Head of caudate nucleus (tissue), 42 donors: ENCODE measurements at regions of chr7 and their contacts with region 1.

Region 1: GRCh38 chr7:131424219-131424822 is 96.6 kb downstream of the MKLN1 start:
- DNase-seq: peak in 8 of 42 donors; percentile 9 to 62 (median 30)

Region 2: DNA sequence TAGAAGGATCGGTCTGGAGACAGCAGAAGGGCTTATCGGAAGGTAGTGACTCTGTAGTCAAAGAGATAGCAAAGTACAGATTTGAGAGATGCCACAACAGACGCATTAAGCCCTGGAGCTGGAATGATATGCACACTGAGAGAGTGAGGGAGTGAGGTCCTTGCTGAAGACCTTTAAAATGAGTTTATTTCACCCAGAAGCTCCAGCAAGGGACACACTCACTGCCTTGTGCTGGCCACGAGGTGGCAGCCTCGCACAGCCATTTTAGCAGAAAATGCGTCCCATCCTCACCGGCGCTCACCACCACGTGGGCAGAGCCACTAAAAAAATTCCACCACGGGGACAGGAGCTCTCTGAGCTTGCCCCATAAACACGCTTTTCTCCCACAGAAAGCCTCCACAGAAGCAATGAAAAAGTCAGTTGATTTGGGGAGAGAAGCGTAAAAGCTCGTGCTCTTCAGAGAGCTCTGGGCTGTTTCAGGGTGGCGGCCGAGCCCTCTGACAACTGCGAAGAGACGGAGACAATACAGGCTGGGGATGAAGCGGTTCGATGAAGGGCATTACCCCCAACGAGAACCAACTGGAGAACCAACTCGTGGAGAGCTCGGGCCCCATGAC is 527.3 kb before region 1 on chr7:
- intact Hi-C with region 1: loop called (anchors 10 kb)
- DNase-seq: peak; percentile 72 to 92 (median 84)

Region 3: DNA sequence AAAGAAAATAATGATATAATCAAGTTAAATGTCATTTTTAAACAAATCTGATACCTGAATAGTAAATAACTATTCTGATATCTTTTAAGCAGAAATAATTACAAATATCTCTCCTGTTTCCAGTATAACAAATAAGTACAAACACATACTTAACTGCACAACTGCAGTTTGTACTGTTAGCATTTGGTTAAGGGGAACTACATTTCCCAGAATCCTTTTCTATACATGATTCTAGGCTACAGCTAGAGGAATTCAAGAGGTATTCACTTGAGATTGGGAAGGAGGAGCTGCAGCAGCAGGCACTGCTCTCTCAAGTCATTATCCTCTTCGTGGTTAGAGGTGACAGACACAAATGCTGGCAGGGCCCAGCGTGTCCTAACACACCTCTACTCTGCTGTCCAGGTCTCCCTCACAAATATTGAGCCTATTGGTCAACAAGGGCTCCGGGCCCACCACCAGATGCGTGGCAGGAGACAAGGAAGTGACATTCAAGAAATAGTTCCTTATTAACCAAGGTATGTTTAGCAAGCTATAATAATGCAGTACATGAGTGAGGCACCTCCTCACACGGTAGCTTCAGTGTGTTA is 351.7 kb before region 1 on chr7:
- intact Hi-C with region 1: loop called (anchors 10 kb)
- DNase-seq: no peak

Region 4: GRCh38 chr7:131327626-131328376 is 96.5 kb before region 1 on chr7 and contains the start of gene MKLN1:
- intact Hi-C with region 1: loop called (anchors 10 kb)
- DNase-seq: peak; percentile 77 to 97 (median 93)